ENCODE measurements at regions of chr2 and their contacts with region 1.

Region 1: GRCh38 chr2:79935771-79936657 is 368.5 kb downstream of the LRRTM1 start:
- DNase-seq: peak; percentile 19 to 64 (median 22)
- ATAC-seq: peak; percentile 93
- H3K4me3 ChIP-seq: no peak overlapping the region
- H3K27ac ChIP-seq: no peak overlapping the region
- H3K4me1 ChIP-seq: no peaks in the 10 kb centered on the region
- H3K27me3 ChIP-seq: no peaks in the 10 kb centered on the region
- CTCF ChIP-seq: peak; percentile 57 to 75 (median 71)
- EP300 ChIP-seq: no peak
- POLR2A ChIP-seq: no peak
- RAD21 ChIP-seq: peak; percentile 62 to 70

Region 2: DNA sequence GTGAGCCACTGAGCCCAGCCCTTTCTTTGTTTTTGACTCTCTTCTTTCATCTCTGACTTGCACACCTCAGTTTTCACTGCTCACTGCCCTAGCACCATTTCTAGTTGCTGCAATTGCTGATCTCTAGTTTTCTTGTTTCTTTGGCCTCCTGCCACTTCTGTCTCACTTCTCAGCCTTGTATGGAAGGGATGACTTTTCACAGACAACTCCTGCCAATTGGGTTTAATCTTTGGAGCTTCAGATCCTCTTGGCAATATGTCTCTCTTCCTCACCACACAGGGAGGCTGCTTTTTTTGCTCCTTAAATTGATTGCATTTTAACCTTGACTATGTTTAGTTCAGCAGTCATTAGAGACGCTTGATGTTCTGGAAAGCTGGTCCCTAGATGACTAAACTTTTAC is 100.1 kb before region 1 on chr2:
- CTCF ChIA-PET with region 1: no interaction called
- POLR2A ChIA-PET with region 1: no interaction called
- in situ Hi-C with region 1: no loop called
- intact Hi-C with region 1: no loop called
- DNase-seq: no peak
- ATAC-seq: no peak
- H3K4me3 ChIP-seq: no peak overlapping the region
- H3K27ac ChIP-seq: no peak overlapping the region
- H3K4me1 ChIP-seq: no peaks in the 10 kb centered on the region
- H3K27me3 ChIP-seq: no peaks in the 10 kb centered on the region
- CTCF ChIP-seq: no peak
- EP300 ChIP-seq: no peak
- POLR2A ChIP-seq: no peak
- RAD21 ChIP-seq: no peak

Region 3: GRCh38 chr2:79982445-79982844 is 46.4 kb after region 1 on chr2:
- CTCF ChIA-PET with region 1: no interaction called
- POLR2A ChIA-PET with region 1: no interaction called
- in situ Hi-C with region 1: no loop called
- intact Hi-C with region 1: loop called (anchors 1 kb)
- DNase-seq: peak; percentile 33 to 58 (median 39)
- ATAC-seq: peak; percentile 90
- H3K4me3 ChIP-seq: no peak overlapping the region
- H3K27ac ChIP-seq: no peak overlapping the region
- H3K4me1 ChIP-seq: no peaks in the 10 kb centered on the region
- H3K27me3 ChIP-seq: no peaks in the 10 kb centered on the region
- CTCF ChIP-seq: peak; percentile 54 to 66 (median 56)
- EP300 ChIP-seq: no peak
- POLR2A ChIP-seq: no peak
- RAD21 ChIP-seq: peak in 1 of 2 experiments; percentile 51; a peak in 2 of 4 replicates